SK-N-SH (cell line): ENCODE measurements at regions of chr17 and their contacts with region 1.

Region 1: GRCh38 chr17:63611354-63611753 is 10.7 kb downstream of the TACO1 start:
- DNase-seq: no peak
- H3K4me3 ChIP-seq: no peak overlapping the region
- H3K27ac ChIP-seq: peak overlapping the region; percentile 6 to 11; a peak in 2 of 4 replicates
- H3K4me1 ChIP-seq: no peaks in the 10 kb centered on the region
- H3K27me3 ChIP-seq: no peaks in the 10 kb centered on the region
- CTCF ChIP-seq: no peak
- EP300 ChIP-seq: no peak
- RAD21 ChIP-seq: no peak

Region 2: DNA sequence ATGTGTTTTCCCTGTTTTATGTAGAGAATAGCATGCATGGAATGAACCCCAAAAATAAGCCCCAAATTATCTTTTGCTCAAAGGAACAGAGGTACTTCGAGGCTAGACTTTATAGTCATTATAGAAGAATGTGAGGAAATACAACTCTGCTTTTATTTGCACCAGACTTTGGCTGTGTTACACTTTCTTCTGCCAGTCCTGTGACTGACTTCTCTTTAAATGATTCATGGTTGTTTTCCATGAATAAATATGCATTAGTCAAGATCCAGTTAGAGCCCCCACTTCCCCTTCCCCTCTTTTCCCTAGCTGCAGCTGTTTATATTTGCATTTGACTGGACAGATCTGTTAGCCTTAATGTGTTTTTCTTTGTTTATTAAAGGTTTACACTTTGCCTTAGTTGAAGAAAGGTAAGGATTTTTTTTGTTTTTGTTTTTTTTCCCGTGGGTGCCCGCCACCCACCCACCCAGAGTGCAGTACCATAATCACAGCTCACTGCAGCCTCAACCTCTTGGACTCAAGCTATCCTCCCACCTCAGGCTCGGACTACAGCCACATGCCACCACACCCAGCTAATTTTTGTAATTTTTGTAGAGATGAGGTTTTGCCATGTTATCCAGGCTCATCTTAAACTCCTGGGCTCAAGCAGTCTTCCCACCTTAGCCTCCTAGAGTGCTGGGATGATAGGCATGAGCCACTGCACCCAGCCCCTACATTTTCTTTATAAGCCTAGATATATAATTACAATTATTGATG is 317.9 kb before region 1 on chr17:
- CTCF ChIA-PET with region 1: no interaction called
- POLR2A ChIA-PET with region 1: no interaction called
- DNase-seq: no peak
- H3K4me3 ChIP-seq: no peak overlapping the region
- H3K27ac ChIP-seq: peak overlapping the region; percentile 73 to 89
- H3K4me1 ChIP-seq: peaks cover 10 to 23% of the 10 kb centered on the region in 2 experiments; a peak in 3 of 4 replicates
- H3K27me3 ChIP-seq: no peaks in the 10 kb centered on the region
- CTCF ChIP-seq: no peak
- EP300 ChIP-seq: peak in 1 of 2 experiments; percentile 76; a peak in 2 of 4 replicates
- RAD21 ChIP-seq: no peak

Region 3: GRCh38 chr17:63413128-63413527 is 198.2 kb before region 1 on chr17:
- CTCF ChIA-PET with region 1: interaction called, 47 read pairs
- POLR2A ChIA-PET with region 1: no interaction called
- DNase-seq: no peak
- H3K4me3 ChIP-seq: no peak overlapping the region
- H3K27ac ChIP-seq: no peak overlapping the region
- H3K4me1 ChIP-seq: peaks cover 0 to 7% of the 10 kb centered on the region in 2 experiments; a peak in 2 of 4 replicates
- H3K27me3 ChIP-seq: no peaks in the 10 kb centered on the region
- CTCF ChIP-seq: no peak
- EP300 ChIP-seq: no peak
- RAD21 ChIP-seq: no peak

Region 4: DNA sequence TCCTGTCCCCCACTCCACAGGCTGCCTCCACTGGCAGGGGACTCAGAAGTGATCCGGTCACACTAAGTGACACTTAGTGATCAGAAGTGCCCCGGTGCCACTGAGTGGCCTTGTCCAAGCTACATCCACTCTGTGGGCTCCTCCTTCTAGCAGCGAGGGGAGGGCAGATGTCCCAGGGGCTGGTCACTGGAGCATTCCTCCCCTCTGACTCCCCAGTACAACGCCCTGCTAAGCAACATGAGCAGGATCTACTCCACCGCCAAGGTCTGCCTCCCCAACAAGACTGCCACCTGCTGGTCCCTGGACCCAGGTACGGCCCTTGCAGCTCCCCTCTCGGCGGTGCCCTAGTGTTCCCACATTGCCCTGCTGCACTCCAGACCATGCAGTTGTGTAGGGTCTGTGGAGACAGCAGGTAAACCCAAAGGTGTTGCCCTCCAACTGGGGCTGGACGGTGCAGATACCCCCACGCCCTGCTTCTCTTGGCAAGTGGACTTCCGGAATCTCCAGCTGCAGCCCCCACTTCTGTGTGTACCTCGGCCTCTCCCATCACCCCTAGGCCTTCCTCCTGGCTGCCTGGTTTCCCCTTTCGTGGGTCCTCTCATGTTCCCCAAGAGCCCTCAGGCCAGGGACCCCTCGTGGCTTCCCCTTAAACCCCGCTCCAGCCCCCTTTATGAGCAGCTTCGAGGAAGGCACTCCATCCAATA is 132.4 kb before region 1 on chr17:
- CTCF ChIA-PET with region 1: interaction called, 95 read pairs
- POLR2A ChIA-PET with region 1: no interaction called
- DNase-seq: peak; percentile 94
- H3K4me3 ChIP-seq: no peak overlapping the region
- H3K27ac ChIP-seq: peak overlapping the region in 1 of 2 experiments; percentile 84; a peak in 2 of 4 replicates
- H3K4me1 ChIP-seq: peaks cover 9 to 67% of the 10 kb centered on the region in 2 experiments
- H3K27me3 ChIP-seq: no peaks in the 10 kb centered on the region
- CTCF ChIP-seq: peak; percentile 98
- EP300 ChIP-seq: no peak
- RAD21 ChIP-seq: peak; percentile 88

Region 5: DNA sequence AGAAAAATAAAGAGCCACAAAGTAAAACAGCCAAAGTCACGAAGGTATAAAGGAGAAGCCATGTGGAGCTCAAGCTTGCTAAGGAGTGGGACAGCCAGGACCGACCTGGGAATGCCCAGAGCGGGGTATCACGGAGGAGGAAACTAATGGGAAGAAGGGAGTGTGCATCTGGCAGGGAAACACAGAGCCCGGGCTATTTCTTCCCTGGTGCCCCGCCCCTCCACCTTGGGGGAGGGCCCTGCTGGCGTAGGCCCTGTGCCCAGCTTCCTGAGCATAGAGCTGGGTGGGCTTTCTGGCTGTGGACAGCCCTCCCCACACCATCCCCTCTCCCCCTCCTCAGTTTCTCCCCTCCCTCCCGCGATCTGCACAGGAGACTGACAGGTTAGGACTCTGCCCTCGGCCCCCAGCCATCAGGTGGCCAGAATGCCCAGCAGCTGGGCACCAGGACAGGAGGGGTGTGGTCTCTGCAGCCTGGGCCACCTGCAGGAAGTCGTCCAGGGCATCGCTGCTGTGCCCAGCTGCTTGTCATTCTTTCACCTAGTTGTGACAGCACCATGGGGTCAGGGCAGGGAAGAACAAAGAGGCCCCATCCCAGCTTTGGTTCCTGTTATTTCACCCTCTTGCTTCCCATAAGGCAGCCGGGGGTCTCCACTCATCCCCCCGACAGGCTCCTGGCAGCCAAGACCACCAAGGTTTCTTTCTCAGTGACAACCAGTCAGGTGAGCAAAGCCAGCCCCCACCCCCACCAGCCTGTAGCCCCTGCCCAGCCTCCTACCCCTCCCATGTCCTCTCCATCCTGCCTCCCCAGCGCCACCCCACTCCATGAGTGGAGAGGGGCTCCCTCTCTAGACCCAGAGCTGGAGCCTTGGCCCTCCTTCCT is 68.2 kb before region 1 on chr17:
- CTCF ChIA-PET with region 1: interaction called, 28 read pairs
- POLR2A ChIA-PET with region 1: no interaction called
- DNase-seq: peak; percentile 44
- H3K4me3 ChIP-seq: no peak overlapping the region
- H3K27ac ChIP-seq: no peak overlapping the region
- H3K4me1 ChIP-seq: peaks cover 0 to 32% of the 10 kb centered on the region in 2 experiments; a peak in 1 of 4 replicates
- H3K27me3 ChIP-seq: peaks cover 11% of the 10 kb centered on the region; the same call in 1 of the 2 replicates
- CTCF ChIP-seq: no peak
- EP300 ChIP-seq: no peak
- RAD21 ChIP-seq: no peak

Region 6: GRCh38 chr17:63592797-63593472 is 18.4 kb before region 1 on chr17:
- CTCF ChIA-PET with region 1: interaction called, 28 read pairs
- POLR2A ChIA-PET with region 1: interaction called, 6 read pairs
- DNase-seq: no peak
- H3K4me3 ChIP-seq: no peak overlapping the region
- H3K27ac ChIP-seq: no peak overlapping the region
- H3K4me1 ChIP-seq: peaks cover 0 to 2% of the 10 kb centered on the region in 2 experiments; a peak in 1 of 4 replicates
- H3K27me3 ChIP-seq: no peaks in the 10 kb centered on the region
- CTCF ChIP-seq: no peak
- EP300 ChIP-seq: no peak
- RAD21 ChIP-seq: no peak

Region 7: DNA sequence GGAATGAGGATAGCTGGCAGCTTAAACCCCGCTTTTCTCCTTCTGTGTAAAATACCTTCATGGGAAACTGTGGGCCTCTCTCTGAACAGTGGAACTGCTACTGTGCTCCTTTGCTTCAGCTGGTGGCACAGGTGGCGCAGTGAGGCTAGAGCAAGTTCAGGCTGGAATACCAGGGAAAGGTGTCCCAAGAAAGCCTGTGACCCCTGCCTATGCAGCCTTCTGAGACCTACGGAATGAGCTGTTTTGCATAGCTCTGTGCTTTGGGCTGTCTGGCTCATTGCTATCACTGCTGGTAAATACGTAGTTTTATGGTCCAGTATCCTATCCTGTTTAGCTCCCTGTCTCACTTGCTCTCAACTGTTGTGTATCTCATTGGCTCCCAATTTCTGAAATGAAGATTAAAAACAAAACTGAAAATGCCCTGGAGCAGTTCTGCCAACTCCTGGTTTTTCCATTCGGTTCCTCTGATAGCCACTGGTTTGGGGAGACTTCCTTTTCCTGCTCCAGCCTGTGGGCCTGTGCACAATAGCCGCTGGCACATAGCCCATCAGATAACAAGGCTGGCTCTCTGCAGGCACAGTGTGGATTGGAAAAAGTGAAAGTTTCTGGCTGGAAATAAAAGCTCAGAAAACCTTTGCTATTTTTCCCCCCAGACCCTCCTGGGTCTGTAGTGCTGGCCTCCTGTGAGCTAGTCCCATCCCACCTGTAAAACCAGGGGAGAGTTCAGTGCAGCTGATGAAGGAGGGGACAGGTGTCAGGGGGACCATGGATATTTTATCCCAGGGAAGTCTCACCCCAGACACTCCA is 64.5 kb after region 1 on chr17:
- CTCF ChIA-PET with region 1: interaction called, 31 read pairs
- POLR2A ChIA-PET with region 1: no interaction called
- DNase-seq: peak; percentile 85
- H3K4me3 ChIP-seq: peak overlapping the region in 1 of 2 experiments; percentile 45; a peak in 3 of 4 replicates
- H3K27ac ChIP-seq: peak overlapping the region; percentile 65 to 97
- H3K4me1 ChIP-seq: peaks cover 26 to 38% of the 10 kb centered on the region in 2 experiments
- H3K27me3 ChIP-seq: no peaks in the 10 kb centered on the region
- CTCF ChIP-seq: no peak
- EP300 ChIP-seq: peak; percentile 52 to 86; a peak in 3 of 4 replicates
- RAD21 ChIP-seq: peak; percentile 42